ENCODE measurements at regions of chr5 and their contacts with region 1.

Region 1: GRCh38 chr5:177454397-177455035 is 7.9 kb downstream of the PRR7 start:
- DNase-seq: peak; percentile 83 to 98 (median 88)
- ATAC-seq: peak; percentile 68
- H3K4me3 ChIP-seq: peak overlapping the region; percentile 70
- H3K4me3 Mint-ChIP-seq: peak overlapping the region; percentile 66 to 92 (median 85)
- H3K27ac ChIP-seq: peak overlapping the region; percentile 97
- H3K27ac Mint-ChIP-seq: peak overlapping the region in 7 of 9 donors; percentile 51 to 95 (median 90)
- H3K4me1 ChIP-seq: peaks cover 12% of the 10 kb centered on the region in 2 donors
- H3K4me1 Mint-ChIP-seq: peaks cover 10 to 27% (median 17%) of the 10 kb centered on the region in 7 donors
- H3K27me3 ChIP-seq: no peaks in the 10 kb centered on the region
- H3K27me3 Mint-ChIP-seq: peaks cover 0 to 22% (median 0%) of the 10 kb centered on the region in 5 donors

Region 2: GRCh38 chr5:177311723-177312648 is 142.5 kb before region 1 on chr5 and contains the start of gene MXD3:
- CTCF ChIA-PET with region 1: interaction called, 12 read pairs
- POLR2A ChIA-PET with region 1: interaction called, 7 read pairs
- intact Hi-C with region 1: loop called in 1 of 2 experiments (anchors 1 kb)
- DNase-seq: peak; percentile 87 to 97 (median 92)
- ATAC-seq: peak; percentile 95
- H3K4me3 ChIP-seq: peak within 1 kb of the TSS; percentile 77
- H3K4me3 Mint-ChIP-seq: peak within 1 kb of the TSS; percentile 78 to 93 (median 84)
- H3K27ac ChIP-seq: peak within 1 kb of the TSS; percentile 51
- H3K27ac Mint-ChIP-seq: peak within 1 kb of the TSS in 6 of 9 donors; percentile 42 to 92 (median 59)
- H3K4me1 ChIP-seq: peaks cover 21 to 22% of the 10 kb centered on the region in 2 donors
- H3K4me1 Mint-ChIP-seq: peaks cover 11 to 49% (median 32%) of the 10 kb centered on the region in 7 donors
- H3K27me3 ChIP-seq: no peaks in the 10 kb centered on the region
- H3K27me3 Mint-ChIP-seq: peaks cover 0 to 5% (median 0%) of the 10 kb centered on the region in 5 donors
- total RNA-seq, gene MXD3: 8.8 to 39.8 (median 18.3) TPM

Region 3: DNA sequence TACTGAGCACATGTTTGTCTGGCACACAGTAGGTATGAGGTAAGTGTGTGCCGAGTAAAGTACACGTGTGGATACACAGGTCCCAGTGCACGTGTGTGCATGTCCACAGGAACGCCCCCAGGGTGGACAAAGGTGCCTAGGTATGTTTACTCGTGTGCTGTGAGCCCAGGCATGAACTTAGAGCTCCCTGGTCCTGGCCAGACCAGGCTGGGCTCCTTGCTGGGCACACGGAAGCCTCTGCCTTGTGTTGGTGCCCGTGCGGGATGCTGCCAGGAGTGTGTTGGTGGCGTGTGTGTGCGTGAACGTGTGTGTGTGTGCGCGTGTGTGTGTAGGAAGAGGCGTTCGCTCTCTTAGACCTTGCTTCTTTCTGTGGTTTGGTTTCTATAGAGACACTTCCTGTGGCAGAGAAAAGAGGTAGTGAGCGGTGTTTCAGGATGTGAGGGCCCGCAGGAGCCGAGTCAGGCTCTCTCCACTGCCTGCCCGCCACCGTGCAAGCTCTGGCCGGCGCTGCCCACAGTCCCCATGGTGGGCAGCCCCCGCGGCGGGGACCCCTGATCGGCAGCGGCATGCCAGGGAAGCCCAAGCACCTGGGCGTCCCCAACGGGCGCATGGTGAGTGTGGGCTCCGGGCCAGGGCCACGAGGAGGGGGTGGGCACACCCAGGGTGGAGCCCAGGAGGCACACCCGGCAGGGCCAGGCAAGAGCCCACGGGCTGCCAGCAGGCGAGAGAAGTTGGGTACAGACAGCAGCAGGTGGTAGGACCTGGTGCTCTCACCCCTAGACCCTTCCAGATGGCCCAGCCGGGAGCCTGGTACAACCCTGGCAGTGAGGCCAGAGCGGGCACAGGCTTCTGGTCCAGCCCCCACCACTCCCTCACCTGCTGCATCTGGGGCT is 96.8 kb before region 1 on chr5 and contains the start of gene RGS14:
- CTCF ChIA-PET with region 1: interaction called, 5 read pairs
- POLR2A ChIA-PET with region 1: interaction called, 3 read pairs
- intact Hi-C with region 1: loop called in 1 of 2 experiments (anchors 1 kb)
- DNase-seq: peak; percentile 50 to 90 (median 87)
- ATAC-seq: peak; percentile 95
- H3K4me3 ChIP-seq: peak within 1 kb of the TSS; percentile 70
- H3K4me3 Mint-ChIP-seq: peak within 1 kb of the TSS; percentile 83 to 97 (median 92)
- H3K27ac ChIP-seq: peak within 1 kb of the TSS; percentile 87
- H3K27ac Mint-ChIP-seq: peak within 1 kb of the TSS; percentile 80 to 98 (median 94)
- H3K4me1 ChIP-seq: peaks cover 47 to 56% of the 10 kb centered on the region in 2 donors
- H3K4me1 Mint-ChIP-seq: peaks cover 64 to 86% (median 74%) of the 10 kb centered on the region in 7 donors
- H3K27me3 ChIP-seq: no peaks in the 10 kb centered on the region
- H3K27me3 Mint-ChIP-seq: no peaks in the 10 kb centered on the region
- total RNA-seq, gene RGS14: 68.4 to 196 (median 112) TPM

Region 4: GRCh38 chr5:177390363-177391300 is 63.9 kb before region 1 on chr5:
- CTCF ChIA-PET with region 1: interaction called, 149 read pairs
- POLR2A ChIA-PET with region 1: interaction called, 46 read pairs
- intact Hi-C with region 1: loop called (anchors 1 kb)
- DNase-seq: peak; percentile 76 to 91 (median 88)
- ATAC-seq: peak; percentile 89
- H3K4me3 ChIP-seq: no peak overlapping the region
- H3K4me3 Mint-ChIP-seq: peak overlapping the region in 9 of 10 donors; percentile 29 to 68 (median 53)
- H3K27ac ChIP-seq: peak overlapping the region; percentile 63
- H3K27ac Mint-ChIP-seq: peak overlapping the region in 8 of 9 donors; percentile 65 to 86 (median 78)
- H3K4me1 ChIP-seq: peaks cover 31 to 33% of the 10 kb centered on the region in 2 donors
- H3K4me1 Mint-ChIP-seq: peaks cover 30 to 39% (median 34%) of the 10 kb centered on the region in 7 donors
- H3K27me3 ChIP-seq: no peaks in the 10 kb centered on the region
- H3K27me3 Mint-ChIP-seq: peaks cover 0 to 6% (median 0%) of the 10 kb centered on the region in 5 donors

Region 5: GRCh38 chr5:177440211-177440971 is 14.1 kb before region 1 on chr5:
- CTCF ChIA-PET with region 1: interaction called, 30 read pairs
- POLR2A ChIA-PET with region 1: interaction called, 41 read pairs
- intact Hi-C with region 1: loop called in 1 of 2 experiments (anchors 1 kb)
- DNase-seq: peak in 2 of 9 donors; percentile 16 to 75
- ATAC-seq: peak; percentile 78
- H3K4me3 ChIP-seq: no peak overlapping the region
- H3K4me3 Mint-ChIP-seq: peak overlapping the region in 6 of 10 donors; percentile 0 to 59 (median 46)
- H3K27ac ChIP-seq: peak overlapping the region; percentile 84
- H3K27ac Mint-ChIP-seq: peak overlapping the region in 8 of 9 donors; percentile 63 to 92 (median 84)
- H3K4me1 ChIP-seq: peaks cover 4 to 51% of the 10 kb centered on the region in 2 donors
- H3K4me1 Mint-ChIP-seq: peaks cover 49 to 78% (median 55%) of the 10 kb centered on the region in 7 donors
- H3K27me3 ChIP-seq: no peaks in the 10 kb centered on the region
- H3K27me3 Mint-ChIP-seq: no peaks in the 10 kb centered on the region

Region 6: GRCh38 chr5:177497292-177498033 is 42.9 kb after region 1 on chr5 and contains the start of gene PDLIM7:
- CTCF ChIA-PET with region 1: interaction called, 9 read pairs
- POLR2A ChIA-PET with region 1: interaction called, 6 read pairs
- intact Hi-C with region 1: loop called (anchors 1 kb)
- DNase-seq: peak; percentile 88 to 97 (median 92)
- ATAC-seq: peak; percentile 92
- H3K4me3 ChIP-seq: peak within 1 kb of the TSS; percentile 77
- H3K4me3 Mint-ChIP-seq: peak within 1 kb of the TSS; percentile 77 to 90 (median 84)
- H3K27ac ChIP-seq: peak within 1 kb of the TSS; percentile 61
- H3K27ac Mint-ChIP-seq: peak within 1 kb of the TSS; percentile 28 to 77 (median 66)
- H3K4me1 ChIP-seq: peaks cover 7 to 10% of the 10 kb centered on the region in 2 donors
- H3K4me1 Mint-ChIP-seq: peaks cover 24 to 44% (median 28%) of the 10 kb centered on the region in 7 donors
- H3K27me3 ChIP-seq: no peaks in the 10 kb centered on the region
- H3K27me3 Mint-ChIP-seq: peaks cover 0 to 24% (median 0%) of the 10 kb centered on the region in 5 donors
- total RNA-seq, gene PDLIM7: 4.1 to 63.2 (median 11.9) TPM

Region 7: GRCh38 chr5:178058321-178059012 is 604.0 kb after region 1 on chr5:
- CTCF ChIA-PET with region 1: no interaction called
- POLR2A ChIA-PET with region 1: no interaction called
- intact Hi-C with region 1: loop called in 1 of 2 experiments (anchors 1 kb)
- DNase-seq: no peak
- ATAC-seq: no peak
- H3K4me3 ChIP-seq: no peak overlapping the region
- H3K4me3 Mint-ChIP-seq: no peak overlapping the region
- H3K27ac ChIP-seq: no peak overlapping the region
- H3K27ac Mint-ChIP-seq: no peak overlapping the region
- H3K4me1 ChIP-seq: no peaks in the 10 kb centered on the region
- H3K4me1 Mint-ChIP-seq: peaks cover 0 to 5% (median 4%) of the 10 kb centered on the region in 7 donors
- H3K27me3 ChIP-seq: no peaks in the 10 kb centered on the region
- H3K27me3 Mint-ChIP-seq: peaks cover 0 to 4% (median 0%) of the 10 kb centered on the region in 5 donors

Measured in naive thymus-derived CD4-positive, alpha-beta T cell (primary cell).